ENCODE measurements at regions of chr1 and their contacts with region 1.

Region 1: DNA sequence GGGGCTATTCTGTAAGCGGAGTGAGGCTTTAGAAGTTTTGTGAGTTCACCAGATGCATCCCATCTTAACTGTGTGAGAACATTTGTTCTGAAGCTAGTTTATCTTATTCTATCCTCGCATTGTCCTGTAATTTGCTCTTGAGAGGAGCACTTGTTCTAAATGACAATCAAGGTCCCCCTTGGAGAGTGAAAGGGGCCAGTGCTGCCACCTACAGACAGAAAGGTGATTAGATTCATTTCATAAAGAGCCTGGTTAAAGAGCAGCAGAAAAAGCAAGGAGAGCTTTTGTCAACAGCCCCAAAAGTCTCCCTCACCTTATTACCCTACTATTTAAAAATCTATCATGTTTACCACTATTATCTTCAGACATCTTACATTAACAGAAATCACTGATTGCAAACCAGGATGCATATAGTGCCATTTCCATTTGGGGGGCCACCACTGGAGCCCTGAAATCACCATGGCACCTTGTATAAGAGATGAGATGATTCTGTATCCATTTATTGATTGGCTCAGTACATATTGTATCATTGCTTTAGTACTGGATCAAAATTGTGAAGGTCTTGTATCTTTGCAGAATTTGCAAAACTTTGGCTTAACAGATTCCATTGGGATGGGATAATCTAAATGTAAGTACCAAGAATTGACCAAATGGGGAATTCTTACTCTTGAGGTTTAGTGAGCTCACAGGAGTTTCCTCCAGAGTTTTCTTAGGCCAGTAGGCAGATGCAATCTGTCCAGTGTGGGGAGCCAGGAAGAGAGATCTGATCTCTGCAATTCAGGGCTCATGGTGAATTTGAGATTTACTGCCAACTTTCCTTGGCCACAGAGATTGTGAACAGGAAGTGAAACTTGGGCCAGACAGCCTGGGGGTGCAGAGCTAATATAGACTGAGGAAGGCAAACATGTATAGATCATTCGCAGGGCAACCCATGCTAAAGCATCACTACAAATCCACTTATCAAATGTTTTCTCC is 64.3 kb upstream of the TRABD2B start:
- DNase-seq: peak; percentile 72
- ATAC-seq: peak; percentile 85
- H3K4me3 Mint-ChIP-seq: no peak overlapping the region
- H3K27ac Mint-ChIP-seq: no peak overlapping the region
- H3K4me1 Mint-ChIP-seq: peaks cover 8% of the 10 kb centered on the region
- H3K27me3 Mint-ChIP-seq: peaks cover 26% of the 10 kb centered on the region
- CTCF ChIP-seq: peak; percentile 57

Region 2: DNA sequence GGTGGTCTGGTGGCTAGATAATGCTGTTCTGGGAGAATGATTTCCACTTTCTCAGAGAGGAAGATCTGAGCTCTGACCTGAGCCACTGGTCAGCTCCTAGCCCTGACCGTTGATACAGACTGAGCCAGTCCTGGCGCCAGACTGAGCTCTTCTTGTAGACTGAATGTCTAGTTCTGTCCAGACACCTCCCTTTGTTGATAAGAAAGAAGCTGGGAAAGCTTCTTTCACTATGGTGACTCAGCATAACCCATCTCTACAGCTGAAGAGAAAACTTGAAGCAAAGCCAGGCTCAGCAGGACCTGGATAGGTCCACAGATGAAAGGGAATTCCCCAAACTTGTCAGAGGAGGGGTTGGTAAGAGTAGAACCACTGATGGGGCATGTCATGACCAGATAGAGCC is 54.4 kb before region 1 on chr1:
- CTCF ChIA-PET with region 1: interaction called, 78 read pairs
- POLR2A ChIA-PET with region 1: no interaction called
- DNase-seq: no peak
- ATAC-seq: no peak
- H3K4me3 Mint-ChIP-seq: no peak overlapping the region
- H3K27ac Mint-ChIP-seq: no peak overlapping the region
- H3K4me1 Mint-ChIP-seq: peaks cover 10% of the 10 kb centered on the region
- H3K27me3 Mint-ChIP-seq: peaks cover 23% of the 10 kb centered on the region
- CTCF ChIP-seq: no peak

Region 3: GRCh38 chr1:48026275-48026674 is 35.2 kb before region 1 on chr1:
- CTCF ChIA-PET with region 1: interaction called, 16 read pairs
- POLR2A ChIA-PET with region 1: no interaction called
- DNase-seq: no peak
- ATAC-seq: no peak
- H3K4me3 Mint-ChIP-seq: no peak overlapping the region
- H3K27ac Mint-ChIP-seq: no peak overlapping the region
- H3K4me1 Mint-ChIP-seq: peaks cover 67% of the 10 kb centered on the region
- H3K27me3 Mint-ChIP-seq: peaks cover 26% of the 10 kb centered on the region
- CTCF ChIP-seq: no peak

Region 4: DNA sequence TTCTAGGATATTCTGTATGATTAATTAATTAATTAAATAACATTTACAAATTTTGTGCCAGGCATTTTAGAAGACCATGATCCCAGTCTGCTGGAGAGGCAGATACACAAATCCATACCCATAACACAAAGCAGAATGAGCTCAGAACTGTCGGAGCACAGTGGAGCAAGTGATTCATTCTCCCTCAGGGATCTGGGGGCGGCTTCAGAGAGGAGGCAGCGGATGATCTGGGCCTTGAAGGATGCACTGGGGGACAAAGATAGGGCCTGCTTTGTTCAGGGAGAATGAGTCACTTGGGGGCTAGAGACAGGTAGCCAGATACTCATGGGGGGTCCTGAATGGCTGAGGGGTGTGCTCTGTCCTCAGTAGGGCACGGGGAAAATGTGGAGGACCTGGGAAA is 13.4 kb before region 1 on chr1:
- CTCF ChIA-PET with region 1: interaction called, 12 read pairs
- POLR2A ChIA-PET with region 1: no interaction called
- DNase-seq: no peak
- ATAC-seq: no peak
- H3K4me3 Mint-ChIP-seq: no peak overlapping the region
- H3K27ac Mint-ChIP-seq: no peak overlapping the region
- H3K4me1 Mint-ChIP-seq: peaks cover 17% of the 10 kb centered on the region
- H3K27me3 Mint-ChIP-seq: peaks cover 37% of the 10 kb centered on the region
- CTCF ChIP-seq: no peak

Region 5: DNA sequence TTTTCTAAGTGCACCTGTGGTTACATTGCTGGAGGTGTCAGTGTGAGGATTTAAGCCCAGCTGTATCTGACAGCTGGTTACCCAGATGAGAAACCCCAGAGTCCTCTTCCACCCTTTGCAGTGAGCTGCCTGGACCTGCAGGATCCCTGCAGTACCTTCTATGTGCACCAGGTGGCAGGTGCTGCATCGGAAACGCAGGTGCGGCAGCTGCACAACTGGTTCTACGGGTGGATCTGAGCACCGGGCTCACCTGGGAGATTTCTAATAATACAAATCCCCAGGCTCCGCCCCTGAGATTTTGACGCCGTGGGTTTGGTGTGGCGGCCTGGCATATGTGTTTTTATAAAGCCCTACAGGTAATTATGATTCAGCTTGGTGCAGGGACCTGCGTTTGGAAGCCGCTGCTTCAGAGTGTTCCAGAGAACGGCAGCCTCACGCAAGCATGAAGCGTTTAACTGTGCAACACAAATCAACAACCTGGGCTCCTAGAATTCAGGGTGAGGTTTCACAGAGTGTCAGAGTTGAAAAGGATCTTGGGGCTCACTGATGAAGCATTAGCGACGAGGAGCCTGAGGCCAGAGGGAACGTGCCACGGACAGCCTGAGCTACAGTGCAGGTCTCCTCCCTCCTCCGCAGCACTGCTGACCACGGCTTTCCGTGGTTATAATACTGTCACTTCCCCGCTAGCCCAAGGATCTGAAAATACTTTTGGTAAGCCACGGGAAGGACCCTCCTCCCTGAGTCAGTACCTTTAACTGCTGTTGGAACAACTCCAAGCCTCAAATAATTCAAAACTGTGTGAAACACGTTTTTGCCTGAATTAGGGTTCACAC is 32.5 kb after region 1 on chr1:
- CTCF ChIA-PET with region 1: interaction called, 22 read pairs
- POLR2A ChIA-PET with region 1: no interaction called
- DNase-seq: peak; percentile 91
- ATAC-seq: peak; percentile 97
- H3K4me3 Mint-ChIP-seq: peak overlapping the region; percentile 40
- H3K27ac Mint-ChIP-seq: no peak overlapping the region
- H3K4me1 Mint-ChIP-seq: peaks cover 4% of the 10 kb centered on the region
- H3K27me3 Mint-ChIP-seq: peaks cover 54% of the 10 kb centered on the region
- CTCF ChIP-seq: peak; percentile 82

Region 6: DNA sequence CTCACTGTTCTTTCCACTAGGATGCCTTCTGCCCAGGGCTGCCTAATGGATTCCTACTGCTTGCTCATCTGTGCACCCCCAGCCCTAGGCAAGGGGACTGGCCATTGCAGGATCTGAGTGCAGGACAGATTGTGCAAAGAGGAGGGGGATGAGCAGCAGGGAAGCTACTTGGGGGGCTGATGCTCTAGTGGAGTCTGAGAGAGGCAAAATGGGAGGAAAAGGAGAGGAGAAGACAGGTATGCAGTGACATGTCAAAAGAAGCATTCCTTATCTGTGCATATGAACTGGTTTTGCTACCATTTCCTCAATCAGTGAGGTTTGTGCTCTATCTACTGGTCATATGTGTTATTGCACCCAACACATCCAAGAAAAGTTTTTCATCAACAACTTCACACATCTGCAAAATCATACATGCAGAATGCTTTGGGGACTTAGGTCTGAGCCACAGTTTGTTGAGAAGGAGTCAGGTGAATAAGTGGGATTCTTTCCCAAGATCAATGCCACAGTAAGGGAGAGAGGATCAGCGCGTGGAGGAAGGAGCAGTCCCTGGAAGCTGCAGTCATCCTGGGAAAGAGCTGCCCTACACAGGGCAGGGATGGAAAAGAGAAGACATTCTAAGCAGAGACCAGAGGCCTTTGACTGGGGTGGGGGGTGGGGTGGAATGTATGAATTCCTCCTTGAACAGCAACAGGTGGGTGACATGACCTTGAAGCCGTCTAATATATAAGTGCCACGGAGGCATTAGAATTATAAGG is 175.4 kb after region 1 on chr1:
- CTCF ChIA-PET with region 1: no interaction called
- POLR2A ChIA-PET with region 1: no interaction called
- DNase-seq: no peak
- ATAC-seq: peak; percentile 87
- H3K4me3 Mint-ChIP-seq: no peak overlapping the region
- H3K27ac Mint-ChIP-seq: no peak overlapping the region
- H3K4me1 Mint-ChIP-seq: no peaks in the 10 kb centered on the region
- H3K27me3 Mint-ChIP-seq: peaks cover 3% of the 10 kb centered on the region
- CTCF ChIP-seq: peak; percentile 33; the same call in 1 of the 2 replicates

Measured in WTC11 (cell line).